HEK293 (cell line): ENCODE measurements at regions of chr14 and their contacts with region 1.

Region 1: GRCh38 chr14:95361373-95362137 is 41.8 kb upstream of the CLMN start:
- H3K4me3 ChIP-seq: no peak overlapping the region
- H3K27ac ChIP-seq: no peak overlapping the region
- H3K4me1 ChIP-seq: peaks cover 4% of the 10 kb centered on the region; the same call in 1 of the 2 replicates
- CTCF ChIP-seq: peak; percentile 47; the same call in 1 of the 2 replicates

Region 2: GRCh38 chr14:94805680-94806288 is 555.8 kb before region 1 on chr14:
- CTCF ChIA-PET with region 1: no interaction called
- POLR2A ChIA-PET with region 1: interaction called, 15 read pairs
- H3K4me3 ChIP-seq: no peak overlapping the region
- H3K27ac ChIP-seq: no peak overlapping the region
- H3K4me1 ChIP-seq: peaks cover 7% of the 10 kb centered on the region
- CTCF ChIP-seq: no peak

Region 3: DNA sequence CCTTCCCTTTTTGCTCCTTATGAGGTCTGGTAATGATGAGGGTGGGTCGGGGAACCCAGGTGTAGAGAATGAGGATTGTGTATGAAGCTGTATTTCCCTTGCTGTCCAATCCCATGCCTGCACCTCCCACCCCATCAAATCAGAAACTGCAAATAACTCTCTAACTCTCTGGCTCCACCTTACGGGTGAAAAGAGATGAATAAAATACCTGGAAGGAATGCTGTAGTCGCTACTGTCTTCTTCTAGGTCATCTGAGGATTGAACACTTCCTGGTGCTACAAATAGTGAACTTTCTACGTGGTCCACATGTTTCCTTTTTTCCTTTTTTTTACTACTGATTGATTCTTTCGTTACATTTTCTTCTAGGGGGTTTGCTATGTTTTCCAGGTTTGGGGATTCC is 165.3 kb before region 1 on chr14:
- CTCF ChIA-PET with region 1: no interaction called
- POLR2A ChIA-PET with region 1: no interaction called
- H3K4me3 ChIP-seq: no peak overlapping the region
- H3K27ac ChIP-seq: no peak overlapping the region
- H3K4me1 ChIP-seq: no peaks in the 10 kb centered on the region
- CTCF ChIP-seq: peak; percentile 29; the same call in 1 of the 2 replicates

Region 4: DNA sequence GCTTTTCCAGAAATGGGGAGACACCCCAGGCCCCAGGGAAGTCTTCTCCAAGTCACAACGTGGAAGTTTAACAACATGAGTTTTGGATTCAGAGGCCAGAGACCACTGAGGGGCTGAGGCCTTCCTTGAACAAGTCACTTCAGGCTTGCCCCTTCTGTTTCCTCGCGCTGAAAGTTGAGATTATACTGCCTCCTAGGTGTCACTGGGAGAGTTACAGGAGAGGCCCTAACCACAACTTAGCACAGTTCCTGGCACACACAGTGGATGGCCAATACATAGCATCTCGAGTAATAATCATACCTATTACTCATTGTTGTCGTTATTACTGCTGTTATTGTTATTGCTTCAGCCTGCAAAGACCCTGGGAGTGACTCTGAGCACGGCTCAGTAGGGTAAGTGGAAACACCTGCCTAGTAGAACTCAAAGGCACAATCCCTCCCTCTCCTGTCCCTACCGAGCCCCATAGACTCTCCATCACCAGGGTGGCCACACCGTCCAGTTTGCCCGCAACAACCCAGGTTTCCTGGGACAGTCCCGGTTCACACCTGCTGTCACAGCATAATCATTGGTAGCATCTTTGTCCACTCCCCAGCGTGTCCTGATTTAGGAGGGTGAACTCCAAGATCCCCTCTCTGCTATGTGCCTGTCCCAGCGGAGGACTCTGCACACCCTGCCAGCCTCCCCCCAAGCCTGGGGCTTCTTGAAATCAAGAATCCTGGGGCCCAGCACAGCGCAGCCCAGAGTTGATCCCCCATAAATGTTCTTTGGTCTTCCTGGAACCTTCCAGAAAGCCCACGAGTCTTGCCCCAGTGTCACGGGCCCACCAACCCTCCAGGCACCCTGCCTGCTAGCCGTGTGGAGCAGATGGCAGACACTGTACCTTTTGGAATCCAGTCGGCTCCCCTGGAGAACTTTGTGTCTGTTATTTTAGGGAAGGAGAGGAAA is 69.9 kb after region 1 on chr14:
- CTCF ChIA-PET with region 1: no interaction called
- POLR2A ChIA-PET with region 1: no interaction called
- H3K4me3 ChIP-seq: no peak overlapping the region
- H3K27ac ChIP-seq: no peak overlapping the region
- H3K4me1 ChIP-seq: no peaks in the 10 kb centered on the region
- CTCF ChIP-seq: peak; percentile 35; the same call in 1 of the 2 replicates